Psoas muscle (tissue), 8 donors: ENCODE measurements at regions of chr3 and their contacts with region 1.

Region 1: DNA sequence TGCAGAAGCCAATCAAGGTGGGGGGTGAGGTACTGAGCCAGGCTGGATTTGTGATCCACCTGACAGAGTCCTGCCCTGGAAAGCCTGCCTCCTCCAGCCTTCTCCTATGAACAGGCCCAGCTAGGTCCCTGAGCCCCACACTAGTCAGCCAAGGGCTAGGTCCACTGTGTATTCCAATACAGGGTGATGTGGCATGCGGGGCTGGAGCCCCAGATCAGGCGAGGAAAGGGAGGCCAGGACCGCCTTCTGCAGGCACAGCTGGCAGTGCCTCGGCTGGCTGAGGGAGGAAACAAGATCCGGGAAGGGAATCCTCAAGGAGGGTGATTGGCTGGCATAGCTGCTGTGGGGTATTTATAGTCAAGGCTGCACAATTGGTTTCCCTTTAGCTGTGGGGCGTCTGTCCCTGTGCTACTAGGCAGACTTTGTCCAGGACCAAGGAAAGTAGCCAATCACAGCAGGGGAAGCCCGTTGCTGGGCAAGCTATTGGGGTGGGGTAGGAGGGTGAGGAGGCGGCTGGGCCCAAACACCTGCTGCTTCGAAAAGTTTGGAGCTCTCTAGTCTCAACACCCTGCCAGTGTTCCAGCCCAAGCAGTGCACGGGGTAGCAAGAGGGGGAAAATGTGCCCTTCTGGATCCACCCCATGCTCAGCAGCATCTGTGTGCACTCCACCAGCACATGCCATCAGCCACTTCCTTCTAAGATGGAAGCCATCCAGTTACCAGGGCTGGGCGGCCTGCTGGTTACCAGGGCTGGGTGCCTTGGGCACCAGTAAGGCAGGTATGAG is 5.9 kb downstream of the KY start:
- DNase-seq: peak; percentile 41 to 77
- ATAC-seq: peak; percentile 86 to 91 (median 89)
- H3K4me3 ChIP-seq: no peak overlapping the region
- H3K27ac ChIP-seq: peak overlapping the region; percentile 51
- H3K4me1 ChIP-seq: peaks cover 48% of the 10 kb centered on the region
- H3K27me3 ChIP-seq: no peaks in the 10 kb centered on the region
- CTCF ChIP-seq: no peak

Region 2: GRCh38 chr3:134600685-134601463 is 44.0 kb before region 1 on chr3:
- intact Hi-C with region 1: loop called in 1 of 2 experiments (anchors 2 kb)
- DNase-seq: peak; percentile 59 to 78
- ATAC-seq: peak; percentile 76 to 92 (median 79)
- H3K4me3 ChIP-seq: no peak overlapping the region
- H3K27ac ChIP-seq: no peak overlapping the region
- H3K4me1 ChIP-seq: no peaks in the 10 kb centered on the region
- H3K27me3 ChIP-seq: no peaks in the 10 kb centered on the region
- CTCF ChIP-seq: peak; percentile 98

Region 3: DNA sequence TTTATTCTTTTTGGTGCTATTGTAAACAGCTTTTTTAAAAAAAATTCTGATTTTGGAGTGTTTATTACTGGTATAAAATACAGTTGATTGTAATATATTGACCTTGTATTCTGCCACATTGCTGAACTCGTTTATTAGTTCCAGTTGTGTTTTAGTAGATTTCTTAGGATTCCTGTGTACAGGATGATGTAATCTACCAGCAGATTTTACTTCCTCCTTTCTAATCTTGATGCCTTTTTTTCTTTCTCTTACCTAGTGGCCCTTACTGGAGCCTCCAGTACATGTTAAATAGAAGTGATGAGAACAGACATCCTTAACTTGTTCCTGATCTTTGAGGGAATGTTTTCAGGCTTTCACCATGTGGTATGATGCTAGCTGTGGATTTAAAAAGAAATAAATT is 76.3 kb after region 1 on chr3:
- intact Hi-C with region 1: loop called in 1 of 2 experiments (anchors 5 kb)
- DNase-seq: no peak
- ATAC-seq: no peak
- H3K4me3 ChIP-seq: no peak overlapping the region
- H3K27ac ChIP-seq: no peak overlapping the region
- H3K4me1 ChIP-seq: peaks cover 41% of the 10 kb centered on the region
- H3K27me3 ChIP-seq: no peaks in the 10 kb centered on the region
- CTCF ChIP-seq: no peak

Region 4: DNA sequence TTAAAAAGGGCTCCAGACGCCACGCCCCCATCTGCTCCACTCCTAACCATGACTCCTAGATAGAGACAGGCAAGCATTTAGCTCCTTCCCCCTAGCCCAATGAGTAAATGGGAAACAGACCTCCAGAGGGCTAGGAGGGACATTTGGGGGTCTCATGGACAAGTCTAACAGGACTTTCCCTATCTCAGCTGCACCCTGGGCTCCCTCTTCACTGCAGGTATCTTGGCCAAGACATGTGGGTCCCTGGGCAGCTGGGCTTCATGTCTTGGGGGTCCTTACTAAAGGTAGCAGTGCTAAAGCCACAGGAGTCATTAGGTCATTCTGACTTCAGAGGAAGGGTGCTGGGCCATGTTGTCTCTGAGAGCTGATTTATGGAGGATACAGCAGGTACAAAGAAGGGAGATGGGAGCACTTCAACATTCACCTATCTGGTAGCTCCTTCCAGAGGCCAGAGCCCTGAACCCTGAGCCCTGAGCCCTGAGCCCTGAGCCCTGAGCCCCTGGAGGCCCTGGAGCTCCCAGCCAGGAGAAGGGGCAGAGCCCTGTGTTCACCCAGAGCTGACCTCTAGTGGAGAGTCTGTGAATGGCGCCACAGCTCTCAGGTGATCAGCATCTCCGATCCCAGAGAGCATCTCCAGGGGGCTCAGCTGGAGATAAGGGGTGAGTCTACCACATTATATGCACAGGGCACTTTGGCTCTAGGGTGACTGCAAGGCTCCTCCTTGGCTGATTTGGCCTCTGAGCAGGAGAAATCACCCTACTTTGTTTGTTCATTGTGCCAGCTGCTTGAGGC is 110.0 kb after region 1 on chr3:
- intact Hi-C with region 1: loop called (anchors 5 kb)
- DNase-seq: peak; percentile 44 to 72
- ATAC-seq: peak; percentile 73 to 81 (median 76)
- H3K4me3 ChIP-seq: no peak overlapping the region
- H3K27ac ChIP-seq: no peak overlapping the region
- H3K4me1 ChIP-seq: peaks cover 17% of the 10 kb centered on the region
- H3K27me3 ChIP-seq: no peaks in the 10 kb centered on the region
- CTCF ChIP-seq: peak; percentile 69